ENCODE measurements at regions of chr5 and their contacts with region 1.

Region 1: GRCh38 chr5:146203011-146203871 is at the start of gene RBM27:
- DNase-seq: peak; percentile 99
- H3K4me3 ChIP-seq: peak within 1 kb of the TSS; percentile 86 to 99
- H3K27ac ChIP-seq: peak within 1 kb of the TSS; percentile 88
- H3K4me1 ChIP-seq: peaks cover 36% of the 10 kb centered on the region
- H3K27me3 ChIP-seq: no peaks in the 10 kb centered on the region
- CTCF ChIP-seq: no peak
- POLR2A ChIP-seq: peak in 1 of 2 donors; percentile 48
- total RNA-seq, gene RBM27: 32.4 TPM

Region 2: DNA sequence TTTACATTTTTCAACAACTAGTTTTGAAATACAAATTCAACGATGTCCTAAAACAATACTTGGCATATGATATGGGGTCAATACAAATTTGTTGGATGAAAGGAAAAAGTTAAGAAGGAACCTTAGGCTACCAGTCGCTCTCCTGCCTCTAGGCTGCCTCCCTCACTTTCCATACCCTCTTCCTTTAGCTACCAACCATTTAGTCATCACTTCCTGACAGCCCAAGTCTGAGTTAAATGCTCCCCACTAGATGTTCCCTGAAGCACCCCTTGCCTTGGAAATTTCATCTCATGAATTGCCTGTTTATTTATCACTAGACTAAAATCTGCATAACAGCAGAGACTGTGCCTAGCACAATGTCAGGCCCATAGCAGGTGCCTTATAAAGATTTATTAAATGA is 18.1 kb before region 1 on chr5:
- intact Hi-C with region 1: loop called (anchors 1 kb)
- DNase-seq: no peak
- H3K4me3 ChIP-seq: no peak overlapping the region
- H3K27ac ChIP-seq: no peak overlapping the region
- H3K4me1 ChIP-seq: peaks cover 26% of the 10 kb centered on the region
- H3K27me3 ChIP-seq: no peaks in the 10 kb centered on the region
- CTCF ChIP-seq: no peak
- POLR2A ChIP-seq: no peak

Measured in vagina (tissue), 2 donors.